Right lobe of liver (tissue), 6 donors: ENCODE measurements at regions of chr6 and their contacts with region 1.

Region 1: GRCh38 chr6:44338228-44339122 is 4.0 kb upstream of the SPATS1 start:
- DNase-seq: peak in 1 of 3 donors; percentile 65
- ATAC-seq: peak; percentile 87 to 91 (median 90)
- H3K4me3 ChIP-seq: no peak overlapping the region
- H3K27ac ChIP-seq: peak overlapping the region in 1 of 3 donors; percentile 45
- H3K4me1 ChIP-seq: peaks cover 0 to 18% (median 0%) of the 10 kb centered on the region in 4 donors
- H3K27me3 ChIP-seq: no peaks in the 10 kb centered on the region
- CTCF ChIP-seq: peak; percentile 70 to 82 (median 78)
- POLR2A ChIP-seq: no peak

Region 2: DNA sequence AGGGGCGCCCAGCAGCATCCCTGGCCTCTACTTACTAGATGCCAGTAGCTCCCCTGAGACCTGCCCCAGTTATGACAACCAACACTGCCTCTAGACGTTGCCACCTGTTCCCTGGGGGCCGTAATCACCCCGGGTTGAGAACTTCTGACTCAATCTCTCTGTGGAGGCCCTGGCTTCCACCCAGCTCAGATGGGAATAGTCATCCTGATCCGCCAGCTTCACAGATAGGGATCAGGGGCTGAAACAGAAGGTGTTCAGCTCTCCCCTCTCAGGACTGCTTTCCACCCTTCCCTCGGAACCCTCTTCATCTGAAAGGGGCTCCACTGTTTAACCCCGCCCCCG is 176.5 kb before region 1 on chr6:
- intact Hi-C with region 1: loop called in 1 of 2 experiments (anchors 10 kb)
- DNase-seq: no peak
- ATAC-seq: no peak
- H3K4me3 ChIP-seq: no peak overlapping the region
- H3K27ac ChIP-seq: no peak overlapping the region
- H3K4me1 ChIP-seq: no peaks in the 10 kb centered on the region
- H3K27me3 ChIP-seq: no peaks in the 10 kb centered on the region
- CTCF ChIP-seq: no peak
- POLR2A ChIP-seq: no peak

Region 3: GRCh38 chr6:44265007-44265721 is 73.3 kb before region 1 on chr6 and contains the start of gene NFKBIE:
- intact Hi-C with region 1: loop called (anchors 5 kb)
- DNase-seq: peak; percentile 97 to 99 (median 98)
- ATAC-seq: peak; percentile 82 to 95 (median 92)
- H3K4me3 ChIP-seq: peak within 1 kb of the TSS; percentile 67 to 97 (median 86)
- H3K27ac ChIP-seq: peak within 1 kb of the TSS; percentile 58 to 88 (median 81)
- H3K4me1 ChIP-seq: peaks cover 0 to 16% (median 7%) of the 10 kb centered on the region in 4 donors
- H3K27me3 ChIP-seq: no peaks in the 10 kb centered on the region
- CTCF ChIP-seq: peak; percentile 13 to 24 (median 18)
- POLR2A ChIP-seq: peak; percentile 94
- total RNA-seq, gene NFKBIE: 2.5 to 30.2 (median 10.8) TPM